ENCODE measurements at regions of chr14 and their contacts with region 1.

Region 1: GRCh38 chr14:52873694-52874093 is 77.2 kb downstream of the FERMT2 start:
- DNase-seq: peak; percentile 6 to 24 (median 19)
- H3K4me3 ChIP-seq: no peak overlapping the region
- H3K4me3 Mint-ChIP-seq: no peak overlapping the region
- H3K27ac ChIP-seq: no peak overlapping the region
- H3K27ac Mint-ChIP-seq: peak overlapping the region in 4 of 7 donors; percentile 10 to 80 (median 16)
- H3K4me1 ChIP-seq: peaks cover 11 to 13% of the 10 kb centered on the region in 2 donors
- H3K4me1 Mint-ChIP-seq: peaks cover 7% of the 10 kb centered on the region
- H3K27me3 ChIP-seq: no peaks in the 10 kb centered on the region
- H3K27me3 Mint-ChIP-seq: peaks cover 0 to 6% (median 0%) of the 10 kb centered on the region in 3 donors
- CTCF ChIP-seq: no peak

Region 2: DNA sequence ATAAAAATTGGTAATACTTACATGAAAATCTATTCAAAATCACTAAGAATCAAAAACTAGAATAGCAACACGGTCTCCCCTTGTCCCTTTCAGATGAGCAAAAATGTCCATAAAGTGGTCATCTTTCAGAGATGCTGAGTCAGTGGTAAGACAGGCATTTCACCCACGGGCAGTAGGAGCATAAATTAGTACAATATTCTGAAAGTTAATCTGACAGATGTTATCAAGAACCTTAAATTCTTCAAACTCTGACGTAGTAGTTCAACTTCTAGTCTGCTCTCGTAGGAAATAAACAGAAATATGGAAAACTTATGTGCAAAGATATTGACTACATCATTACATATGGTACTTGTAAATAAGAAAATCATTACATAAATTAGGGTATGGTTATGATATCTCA is 49.2 kb before region 1 on chr14:
- intact Hi-C with region 1: no loop called
- DNase-seq: no peak
- H3K4me3 ChIP-seq: no peak overlapping the region
- H3K4me3 Mint-ChIP-seq: peak overlapping the region in 1 of 2 donors; percentile 42
- H3K27ac ChIP-seq: no peak overlapping the region
- H3K27ac Mint-ChIP-seq: no peak overlapping the region
- H3K4me1 ChIP-seq: no peaks in the 10 kb centered on the region
- H3K4me1 Mint-ChIP-seq: no peaks in the 10 kb centered on the region
- H3K27me3 ChIP-seq: peaks cover 2 to 4% of the 10 kb centered on the region in 2 donors
- H3K27me3 Mint-ChIP-seq: peaks cover 2 to 10% (median 7%) of the 10 kb centered on the region in 3 donors
- CTCF ChIP-seq: no peak

Region 3: DNA sequence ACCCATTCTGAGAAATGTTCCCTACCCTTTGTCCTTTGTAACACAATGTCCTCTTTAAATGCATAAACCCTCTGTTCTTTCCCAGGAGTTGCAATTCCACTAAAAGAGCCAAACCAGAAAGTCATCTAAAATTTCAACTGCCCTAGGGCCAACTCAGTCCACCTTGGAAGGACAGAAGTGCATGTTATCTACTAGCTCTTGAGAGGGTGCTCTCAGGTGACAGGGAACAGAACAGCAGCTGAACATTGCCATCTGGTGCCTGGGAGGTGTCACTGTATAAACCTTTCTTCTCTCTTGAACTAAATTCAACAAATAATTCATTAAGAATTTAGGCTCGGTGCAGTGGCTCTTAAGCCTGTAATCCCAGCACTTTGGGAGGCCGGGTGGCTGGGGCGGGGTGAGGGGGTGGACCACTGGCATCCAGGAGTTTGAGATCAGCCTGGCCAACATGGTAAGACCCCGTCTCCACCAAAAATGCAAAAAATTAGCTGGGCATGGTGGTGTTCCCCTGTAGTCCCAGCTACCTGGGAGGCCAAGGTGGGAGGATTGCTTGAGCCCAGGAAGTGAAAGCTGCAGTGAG is 87.5 kb after region 1 on chr14:
- intact Hi-C with region 1: loop called in 1 of 2 experiments (anchors 10 kb)
- DNase-seq: peak; percentile 10 to 23 (median 20)
- H3K4me3 ChIP-seq: no peak overlapping the region
- H3K4me3 Mint-ChIP-seq: no peak overlapping the region
- H3K27ac ChIP-seq: no peak overlapping the region
- H3K27ac Mint-ChIP-seq: no peak overlapping the region
- H3K4me1 ChIP-seq: no peaks in the 10 kb centered on the region
- H3K4me1 Mint-ChIP-seq: no peaks in the 10 kb centered on the region
- H3K27me3 ChIP-seq: no peaks in the 10 kb centered on the region
- H3K27me3 Mint-ChIP-seq: peaks cover 0 to 7% (median 4%) of the 10 kb centered on the region in 3 donors
- CTCF ChIP-seq: peak; percentile 46

Region 4: GRCh38 chr14:53613404-53614253 is 739.9 kb after region 1 on chr14:
- intact Hi-C with region 1: no loop called
- DNase-seq: no peak
- H3K4me3 ChIP-seq: no peak overlapping the region
- H3K4me3 Mint-ChIP-seq: no peak overlapping the region
- H3K27ac ChIP-seq: no peak overlapping the region
- H3K27ac Mint-ChIP-seq: no peak overlapping the region
- H3K4me1 ChIP-seq: no peaks in the 10 kb centered on the region
- H3K4me1 Mint-ChIP-seq: no peaks in the 10 kb centered on the region
- H3K27me3 ChIP-seq: no peaks in the 10 kb centered on the region
- H3K27me3 Mint-ChIP-seq: no peaks in the 10 kb centered on the region
- CTCF ChIP-seq: no peak

Measured in CD14-positive monocyte (primary cell).